Mammary epithelial cell (primary cell): ENCODE measurements at regions of chr2 and their contacts with region 1.

Region 1: GRCh38 chr2:56580242-56580641 is 396.5 kb downstream of the CCDC85A start:
- DNase-seq: peak; percentile 48
- H3K4me3 ChIP-seq: no peak overlapping the region
- H3K27ac ChIP-seq: no peak overlapping the region
- H3K4me1 ChIP-seq: no peaks in the 10 kb centered on the region
- H3K27me3 ChIP-seq: no peaks in the 10 kb centered on the region
- CTCF ChIP-seq: no peak

Region 2: DNA sequence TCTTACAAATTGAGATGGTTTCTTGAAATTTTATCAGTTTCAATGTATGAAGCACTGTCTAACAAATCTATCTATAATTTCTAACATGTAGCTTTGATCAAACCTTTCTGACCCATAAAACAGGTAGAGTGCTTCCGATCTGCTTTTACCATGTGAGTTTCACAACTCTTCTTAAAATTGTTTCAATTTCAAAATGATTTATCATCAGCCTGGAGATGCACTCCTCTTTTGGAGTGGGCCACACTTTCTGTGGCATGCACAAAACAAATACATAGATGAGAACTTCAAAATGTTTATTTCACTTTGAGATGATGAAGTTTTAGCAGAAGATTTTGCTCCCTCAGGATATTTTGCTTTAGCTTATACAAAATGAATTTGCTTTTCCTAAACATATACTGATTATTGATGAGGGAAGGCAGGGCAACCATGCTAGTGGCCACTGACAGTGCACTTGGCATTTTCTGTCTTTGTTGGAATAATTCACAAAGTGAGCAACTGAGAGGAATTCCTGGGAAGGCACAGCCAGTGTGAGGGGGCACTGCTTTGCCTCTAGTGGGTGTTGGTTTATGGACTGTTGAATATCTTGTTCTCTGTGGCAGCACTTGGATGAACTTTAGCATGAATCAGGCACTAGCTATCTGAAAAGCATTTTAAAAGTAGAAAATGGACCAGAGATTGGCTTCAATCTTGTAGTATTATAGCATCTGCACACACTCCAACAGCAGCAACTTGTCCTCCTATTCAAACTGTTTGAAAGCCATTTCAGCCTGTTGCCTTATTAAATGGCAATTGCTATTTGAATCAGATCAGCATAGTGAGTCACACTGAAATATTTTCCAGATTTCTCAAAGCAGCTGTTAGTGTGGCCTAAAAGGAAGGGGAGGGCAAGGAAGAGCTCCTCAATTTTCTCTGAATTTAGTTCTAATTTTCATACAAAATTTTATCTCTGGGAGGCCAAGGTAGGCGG is 203.3 kb before region 1 on chr2:
- CTCF ChIA-PET with region 1: no interaction called
- dilution Hi-C with region 1: no loop called
- in situ Hi-C with region 1: no loop called
- intact Hi-C with region 1: loop called (anchors 10 kb)
- DNase-seq: peak; percentile 18
- H3K4me3 ChIP-seq: no peak overlapping the region
- H3K27ac ChIP-seq: no peak overlapping the region
- H3K4me1 ChIP-seq: peaks cover 7% of the 10 kb centered on the region
- H3K27me3 ChIP-seq: no peaks in the 10 kb centered on the region
- CTCF ChIP-seq: no peak

Region 3: GRCh38 chr2:56741601-56742102 is 161.4 kb after region 1 on chr2:
- CTCF ChIA-PET with region 1: no interaction called
- dilution Hi-C with region 1: no loop called
- in situ Hi-C with region 1: no loop called
- intact Hi-C with region 1: loop called (anchors 1 kb)
- DNase-seq: peak; percentile 92
- H3K4me3 ChIP-seq: peak overlapping the region in 1 of 3 experiments; percentile 43
- H3K27ac ChIP-seq: peak overlapping the region; percentile 13
- H3K4me1 ChIP-seq: peaks cover 20% of the 10 kb centered on the region
- H3K27me3 ChIP-seq: no peaks in the 10 kb centered on the region
- CTCF ChIP-seq: no peak